CD8-positive, alpha-beta T cell (primary cell): ENCODE measurements at regions of chr5 and their contacts with region 1.

Region 1: GRCh38 chr5:150436141-150436680 is 13.3 kb downstream of the RPS14 start:
- DNase-seq: peak; percentile 84 to 96 (median 92)
- ATAC-seq: peak; percentile 98
- H3K4me3 ChIP-seq: no peak overlapping the region
- H3K4me3 Mint-ChIP-seq: peak overlapping the region; percentile 50
- H3K27ac ChIP-seq: no peak overlapping the region
- H3K27ac Mint-ChIP-seq: peak overlapping the region; percentile 74
- H3K4me1 ChIP-seq: no peaks in the 10 kb centered on the region
- H3K4me1 Mint-ChIP-seq: peaks cover 7% of the 10 kb centered on the region
- H3K27me3 ChIP-seq: no peaks in the 10 kb centered on the region
- H3K27me3 Mint-ChIP-seq: no peaks in the 10 kb centered on the region
- CTCF ChIP-seq: peak; percentile 74

Region 2: GRCh38 chr5:150129813-150130492 is 306.3 kb before region 1 on chr5:
- CTCF ChIA-PET with region 1: interaction called, 3 read pairs
- POLR2A ChIA-PET with region 1: no interaction called
- intact Hi-C with region 1: loop called in 1 of 2 experiments (anchors 2 kb)
- DNase-seq: peak in 8 of 9 experiments; percentile 13 to 61 (median 46)
- ATAC-seq: peak; percentile 52
- H3K4me3 ChIP-seq: no peak overlapping the region
- H3K4me3 Mint-ChIP-seq: no peak overlapping the region
- H3K27ac ChIP-seq: no peak overlapping the region
- H3K27ac Mint-ChIP-seq: no peak overlapping the region
- H3K4me1 ChIP-seq: no peaks in the 10 kb centered on the region
- H3K4me1 Mint-ChIP-seq: no peaks in the 10 kb centered on the region
- H3K27me3 ChIP-seq: no peaks in the 10 kb centered on the region
- H3K27me3 Mint-ChIP-seq: no peaks in the 10 kb centered on the region
- CTCF ChIP-seq: peak; percentile 67

Region 3: GRCh38 chr5:150161242-150162141 is 274.7 kb before region 1 on chr5:
- CTCF ChIA-PET with region 1: interaction called, 3 read pairs
- POLR2A ChIA-PET with region 1: no interaction called
- intact Hi-C with region 1: loop called (anchors 1 kb)
- DNase-seq: peak; percentile 63 to 86 (median 71)
- ATAC-seq: peak; percentile 94
- H3K4me3 ChIP-seq: no peak overlapping the region
- H3K4me3 Mint-ChIP-seq: no peak overlapping the region
- H3K27ac ChIP-seq: no peak overlapping the region
- H3K27ac Mint-ChIP-seq: no peak overlapping the region
- H3K4me1 ChIP-seq: no peaks in the 10 kb centered on the region
- H3K4me1 Mint-ChIP-seq: no peaks in the 10 kb centered on the region
- H3K27me3 ChIP-seq: peaks cover 0 to 3% of the 10 kb centered on the region in 2 experiments
- H3K27me3 Mint-ChIP-seq: peaks cover 17% of the 10 kb centered on the region
- CTCF ChIP-seq: peak; percentile 85

Region 4: DNA sequence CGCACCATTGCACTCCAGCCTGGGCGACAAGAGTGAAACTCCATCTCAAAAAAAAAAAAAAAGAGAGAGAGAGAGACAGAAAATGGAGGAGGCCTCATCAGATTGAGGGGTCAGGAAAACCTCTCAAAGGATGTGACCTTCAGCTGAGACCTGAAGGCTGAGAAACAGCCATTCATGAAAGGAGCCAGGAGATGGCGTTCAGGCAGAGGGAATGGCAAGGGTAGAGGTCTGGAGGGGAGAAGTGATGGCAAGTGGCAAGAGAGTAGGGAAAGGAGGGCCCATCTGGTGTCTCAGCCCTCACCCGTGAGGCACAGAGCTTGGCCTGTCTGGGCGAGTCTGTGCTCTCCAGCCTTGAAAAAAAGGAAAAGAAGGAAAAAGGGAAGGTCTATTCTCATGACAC is 163.7 kb before region 1 on chr5:
- CTCF ChIA-PET with region 1: no interaction called
- POLR2A ChIA-PET with region 1: no interaction called
- intact Hi-C with region 1: loop called (anchors 1 to 2 kb)
- DNase-seq: peak in 2 of 9 experiments; percentile 23 to 37
- ATAC-seq: no peak
- H3K4me3 ChIP-seq: no peak overlapping the region
- H3K4me3 Mint-ChIP-seq: no peak overlapping the region
- H3K27ac ChIP-seq: no peak overlapping the region
- H3K27ac Mint-ChIP-seq: no peak overlapping the region
- H3K4me1 ChIP-seq: no peaks in the 10 kb centered on the region
- H3K4me1 Mint-ChIP-seq: no peaks in the 10 kb centered on the region
- H3K27me3 ChIP-seq: no peaks in the 10 kb centered on the region
- H3K27me3 Mint-ChIP-seq: peaks cover 8% of the 10 kb centered on the region
- CTCF ChIP-seq: no peak

Region 5: DNA sequence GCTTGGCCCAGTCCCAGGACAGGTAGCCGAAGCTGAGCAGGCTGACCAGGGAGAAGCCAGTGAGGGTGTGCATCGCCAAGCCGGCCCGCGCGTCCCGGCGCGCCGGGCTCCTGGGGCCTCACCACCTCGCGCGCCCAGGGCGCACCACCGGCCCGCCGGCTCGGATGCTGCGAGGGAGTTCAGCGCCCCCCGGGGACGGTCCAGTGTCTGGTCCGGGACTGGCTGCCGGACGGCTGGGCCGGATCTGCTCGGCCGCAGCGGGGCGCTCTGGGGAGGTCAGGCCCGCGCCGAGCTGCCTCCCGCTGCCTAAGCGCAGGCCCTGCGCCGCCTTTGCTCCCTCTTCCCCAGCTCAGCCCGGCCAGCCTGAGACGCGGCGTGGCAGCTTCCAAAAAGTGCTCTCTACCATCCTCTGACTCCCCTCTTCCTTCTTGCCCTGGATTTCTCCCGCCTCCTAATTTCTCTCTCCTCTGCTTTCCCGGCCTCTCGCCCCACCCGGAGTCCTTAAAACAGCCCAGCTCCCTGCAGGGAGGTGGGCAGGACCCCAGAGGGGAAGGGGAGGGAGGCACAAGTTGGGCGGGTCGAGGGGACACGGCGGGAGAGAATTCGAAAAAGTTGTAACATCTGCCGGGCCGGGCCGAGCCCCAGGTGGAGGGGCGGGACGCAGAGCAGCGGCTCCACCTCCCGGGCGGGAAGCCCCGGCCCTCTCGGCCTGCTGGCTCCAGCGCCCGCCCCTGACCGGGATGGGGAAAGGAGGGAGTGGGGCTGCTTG is 133.7 kb before region 1 on chr5 and contains the start of gene ARSI:
- CTCF ChIA-PET with region 1: no interaction called
- POLR2A ChIA-PET with region 1: no interaction called
- intact Hi-C with region 1: no loop called
- DNase-seq: no peak
- ATAC-seq: no peak
- H3K4me3 ChIP-seq: no peak within 1 kb of the TSS
- H3K4me3 Mint-ChIP-seq: no peak within 1 kb of the TSS
- H3K27ac ChIP-seq: no peak within 1 kb of the TSS
- H3K27ac Mint-ChIP-seq: no peak within 1 kb of the TSS
- H3K4me1 ChIP-seq: no peaks in the 10 kb centered on the region
- H3K4me1 Mint-ChIP-seq: peaks cover 6% of the 10 kb centered on the region
- H3K27me3 ChIP-seq: peaks cover 6 to 12% of the 10 kb centered on the region in 2 experiments
- H3K27me3 Mint-ChIP-seq: peaks cover 36% of the 10 kb centered on the region
- CTCF ChIP-seq: no peak
- total RNA-seq, gene ARSI: 0.14 to 0.61 TPM

Region 6: DNA sequence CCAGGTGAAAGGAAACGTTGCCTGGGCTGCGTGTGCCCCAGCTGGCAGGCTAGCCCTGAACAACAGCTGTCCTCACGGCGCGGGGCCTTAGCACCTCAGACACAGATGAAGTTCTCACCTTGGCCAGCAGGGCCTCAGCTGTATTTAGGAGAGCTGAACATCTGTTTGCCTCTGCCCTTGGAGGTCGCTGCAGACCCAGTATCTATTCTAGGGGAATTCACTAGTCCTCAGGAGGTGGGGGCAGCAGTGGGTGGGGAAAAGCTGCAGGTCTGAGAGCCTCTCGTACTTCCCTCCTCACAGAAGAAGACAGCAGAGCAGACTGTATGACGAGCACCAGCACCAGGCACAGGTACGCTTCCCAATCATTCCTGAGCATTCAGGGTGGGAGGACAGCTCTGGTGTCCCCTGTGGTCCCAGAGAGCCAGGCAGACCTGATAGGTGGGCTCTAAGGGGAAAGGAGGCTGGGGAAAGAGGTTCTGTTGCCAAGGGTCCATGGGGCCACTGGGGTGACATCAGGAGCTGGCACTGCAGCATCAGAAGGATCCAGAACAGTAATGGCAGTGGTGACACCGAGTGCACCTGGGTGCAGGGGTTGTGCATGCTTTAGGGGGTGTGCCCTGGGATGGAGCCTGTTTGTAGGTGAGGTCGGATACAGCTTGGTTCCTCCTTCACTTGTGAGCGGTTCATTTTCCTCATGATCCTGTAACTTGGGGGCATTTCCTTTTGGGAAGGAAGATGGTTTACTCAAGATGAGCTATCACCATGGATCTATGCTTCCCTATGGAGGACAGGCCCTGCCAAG is 37.3 kb before region 1 on chr5:
- CTCF ChIA-PET with region 1: interaction called, 25 read pairs
- POLR2A ChIA-PET with region 1: interaction called, 3 read pairs
- intact Hi-C with region 1: loop called (anchors 1 to 2 kb)
- DNase-seq: peak in 4 of 9 experiments; percentile 33 to 73 (median 48)
- ATAC-seq: peak; percentile 59
- H3K4me3 ChIP-seq: no peak overlapping the region
- H3K4me3 Mint-ChIP-seq: no peak overlapping the region
- H3K27ac ChIP-seq: peak overlapping the region in 1 of 2 experiments; percentile 31
- H3K27ac Mint-ChIP-seq: peak overlapping the region; percentile 71
- H3K4me1 ChIP-seq: no peaks in the 10 kb centered on the region
- H3K4me1 Mint-ChIP-seq: no peaks in the 10 kb centered on the region
- H3K27me3 ChIP-seq: no peaks in the 10 kb centered on the region
- H3K27me3 Mint-ChIP-seq: no peaks in the 10 kb centered on the region
- CTCF ChIP-seq: peak; percentile 31

Region 7: GRCh38 chr5:150409638-150410523 is 26.3 kb before region 1 on chr5:
- CTCF ChIA-PET with region 1: interaction called, 6 read pairs
- POLR2A ChIA-PET with region 1: interaction called, 3 read pairs
- intact Hi-C with region 1: loop called (anchors 1 kb)
- DNase-seq: peak in 8 of 9 experiments; percentile 15 to 80 (median 44)
- ATAC-seq: no peak
- H3K4me3 ChIP-seq: peak overlapping the region; percentile 88 to 90
- H3K4me3 Mint-ChIP-seq: peak overlapping the region; percentile 100
- H3K27ac ChIP-seq: peak overlapping the region; percentile 24 to 99
- H3K27ac Mint-ChIP-seq: peak overlapping the region; percentile 100
- H3K4me1 ChIP-seq: peaks cover 39% of the 10 kb centered on the region
- H3K4me1 Mint-ChIP-seq: peaks cover 45% of the 10 kb centered on the region
- H3K27me3 ChIP-seq: no peaks in the 10 kb centered on the region
- H3K27me3 Mint-ChIP-seq: no peaks in the 10 kb centered on the region
- CTCF ChIP-seq: no peak